Prostate gland (tissue), 2 donors: ENCODE measurements at regions of chr5 and their contacts with region 1.

Region 1: DNA sequence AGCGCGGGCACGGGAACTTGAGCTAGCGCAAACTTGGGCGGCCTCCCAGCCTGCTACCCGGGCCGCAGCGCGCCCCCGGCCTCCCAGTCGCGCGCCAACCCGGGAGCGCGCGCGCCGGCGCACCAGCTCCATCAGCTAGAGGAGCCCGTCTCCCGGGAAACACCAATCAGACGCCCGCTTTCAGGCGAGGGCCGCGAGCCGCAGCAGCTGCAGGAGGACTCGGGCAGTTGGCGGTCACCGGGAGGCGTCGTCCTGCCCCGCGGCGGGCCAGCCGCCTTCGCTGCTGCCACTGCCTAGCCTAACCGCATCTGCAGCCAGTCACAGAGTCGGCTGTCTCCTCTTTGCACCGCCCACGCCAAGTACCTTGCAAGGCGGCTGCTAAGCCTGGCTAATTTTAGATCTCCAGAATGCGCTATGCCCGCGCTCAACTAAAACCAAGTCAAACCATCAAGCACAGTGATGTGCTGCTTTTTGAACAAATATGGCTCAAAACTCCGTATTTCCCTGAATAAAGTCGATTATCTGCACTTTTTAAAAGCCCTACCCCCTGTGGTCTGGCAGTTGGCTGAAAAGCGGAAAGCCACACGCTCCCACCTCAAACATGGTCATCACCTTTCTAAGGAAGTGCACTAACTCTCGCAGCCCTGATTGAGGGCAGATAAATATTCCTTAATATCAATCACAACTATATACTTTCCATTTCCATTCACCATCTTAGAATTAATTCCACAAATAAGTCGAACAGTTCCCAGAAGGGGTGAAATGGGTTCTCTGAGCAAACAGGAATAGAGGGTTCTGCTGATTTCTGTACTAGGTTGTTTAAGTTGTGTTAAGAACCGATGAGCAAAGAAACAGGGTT is 221.8 kb downstream of the MEF2C start:
- DNase-seq: no peak
- H3K4me3 ChIP-seq: peak overlapping the region in 1 of 2 donors; percentile 10
- H3K27ac ChIP-seq: no peak overlapping the region
- H3K4me1 ChIP-seq: no peaks in the 10 kb centered on the region
- H3K27me3 ChIP-seq: peaks cover 26% of the 10 kb centered on the region
- CTCF ChIP-seq: no peak
- POLR2A ChIP-seq: no peak

Region 2: GRCh38 chr5:88268385-88269184 is 392.6 kb before region 1 on chr5 and contains the start of gene TMEM161B:
- intact Hi-C with region 1: loop called (anchors 10 kb)
- DNase-seq: peak; percentile 92
- H3K4me3 ChIP-seq: peak within 1 kb of the TSS; percentile 58 to 75
- H3K27ac ChIP-seq: peak within 1 kb of the TSS; percentile 21 to 70
- H3K4me1 ChIP-seq: no peaks in the 10 kb centered on the region
- H3K27me3 ChIP-seq: no peaks in the 10 kb centered on the region
- CTCF ChIP-seq: peak in 1 of 4 experiments; percentile 17
- POLR2A ChIP-seq: peak; percentile 54
- total RNA-seq, gene TMEM161B: 16.2 to 17.0 TPM

Region 3: GRCh38 chr5:88979244-88979643 is 318.1 kb after region 1 on chr5:
- intact Hi-C with region 1: no loop called
- DNase-seq: no peak
- H3K4me3 ChIP-seq: no peak overlapping the region
- H3K27ac ChIP-seq: no peak overlapping the region
- H3K4me1 ChIP-seq: no peaks in the 10 kb centered on the region
- H3K27me3 ChIP-seq: no peaks in the 10 kb centered on the region
- CTCF ChIP-seq: no peak
- POLR2A ChIP-seq: no peak